Heart left ventricle (tissue), 16 donors: ENCODE measurements at regions of chr14 and their contacts with region 1.

Region 1: GRCh38 chr14:75427482-75428229 is at the start of gene JDP2:
- DNase-seq: peak; percentile 96 to 98 (median 97)
- ATAC-seq: peak; percentile 88 to 96 (median 93)
- H3K4me3 ChIP-seq: peak within 1 kb of the TSS; percentile 47 to 96 (median 79)
- H3K27ac ChIP-seq: peak within 1 kb of the TSS; percentile 75 to 98 (median 95)
- H3K4me1 ChIP-seq: peaks cover 4 to 57% (median 50%) of the 10 kb centered on the region in 12 donors
- H3K27me3 ChIP-seq: no peaks in the 10 kb centered on the region
- CTCF ChIP-seq: peak in 9 of 12 donors; percentile 8 to 48 (median 23)
- POLR2A ChIP-seq: peak; percentile 21 to 83
- total RNA-seq, gene JDP2: 12.2 to 72.6 (median 28.1) TPM

Region 2: DNA sequence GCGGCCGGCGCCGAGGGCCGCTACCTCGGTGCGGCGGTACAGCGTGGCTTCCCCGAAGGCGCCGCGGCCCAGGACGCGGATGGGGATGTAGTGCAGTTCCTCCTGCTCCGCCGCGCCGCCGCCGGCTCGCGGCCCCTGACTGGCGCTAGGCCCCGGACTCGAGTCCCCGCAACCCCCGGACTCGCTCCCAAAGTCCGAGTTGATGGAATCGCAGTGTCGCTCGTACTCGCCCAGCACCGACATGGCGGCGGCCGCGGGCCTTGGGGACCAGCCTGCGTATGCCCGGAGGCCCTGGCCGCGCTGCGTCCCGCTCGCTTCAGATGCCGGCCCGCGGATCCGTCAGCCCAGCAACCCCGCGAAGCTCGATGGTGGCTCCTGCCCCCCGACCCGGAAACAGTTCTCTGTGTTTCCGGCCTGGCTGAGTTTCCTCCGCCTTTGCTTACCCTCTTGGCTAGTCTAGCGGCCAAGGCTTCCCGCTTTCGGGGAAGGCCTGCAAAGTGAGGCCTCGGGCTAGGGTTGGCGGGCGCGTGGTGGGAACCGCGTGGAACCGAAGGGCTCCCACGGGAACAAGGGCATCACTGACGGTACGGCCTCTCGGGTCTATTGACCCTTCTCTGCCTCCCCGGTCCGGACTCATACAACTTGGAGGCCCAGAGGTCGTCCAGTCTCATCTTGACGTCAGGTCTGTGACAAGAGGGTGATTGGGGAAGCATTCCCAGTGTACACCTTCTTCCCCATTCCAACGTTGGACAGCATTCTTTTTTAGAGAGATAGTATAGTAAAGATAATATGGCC is 300.8 kb before region 1 on chr14 and contains the start of gene NEK9:
- intact Hi-C with region 1: loop called in 1 of 10 experiments (anchors 10 kb)
- DNase-seq: peak; percentile 93 to 94 (median 93)
- ATAC-seq: peak; percentile 94 to 96 (median 96)
- H3K4me3 ChIP-seq: peak within 1 kb of the TSS; percentile 57 to 96 (median 80)
- H3K27ac ChIP-seq: peak within 1 kb of the TSS; percentile 87 to 99 (median 97)
- H3K4me1 ChIP-seq: peaks cover 3 to 47% (median 29%) of the 10 kb centered on the region in 12 donors
- H3K27me3 ChIP-seq: no peaks in the 10 kb centered on the region
- CTCF ChIP-seq: peak in 2 of 12 donors; percentile 11 to 14
- POLR2A ChIP-seq: peak in 1 of 2 donors; percentile 56
- total RNA-seq, gene NEK9: 69.0 to 114 (median 98.3) TPM

Region 3: DNA sequence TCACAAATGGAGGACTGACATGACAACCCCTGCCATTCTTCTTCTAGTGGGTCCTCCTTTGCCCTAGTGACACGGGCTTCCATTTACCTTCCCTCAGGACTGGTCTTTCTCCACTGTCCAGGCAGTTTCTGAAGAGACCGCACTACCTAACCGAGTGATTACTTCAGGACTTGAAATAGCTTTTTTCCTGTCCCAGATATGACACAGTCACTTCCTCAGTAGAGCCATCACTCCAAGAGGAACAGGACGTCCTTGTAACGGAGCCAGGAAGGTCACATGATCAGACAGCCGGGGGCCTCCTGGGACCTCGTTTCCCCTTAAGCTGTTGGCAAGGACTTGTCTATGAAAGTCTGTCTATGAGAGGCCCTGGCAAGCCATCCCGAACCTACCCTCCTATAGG is 86.7 kb before region 1 on chr14:
- intact Hi-C with region 1: loop called in 3 of 10 experiments (anchors 1 kb)
- DNase-seq: peak; percentile 90 to 97 (median 91)
- ATAC-seq: peak; percentile 96 to 97 (median 97)
- H3K4me3 ChIP-seq: peak overlapping the region in 1 of 12 donors; percentile 26
- H3K27ac ChIP-seq: peak overlapping the region; percentile 71 to 95 (median 88)
- H3K4me1 ChIP-seq: peaks cover 10 to 79% (median 32%) of the 10 kb centered on the region in 12 donors
- H3K27me3 ChIP-seq: no peaks in the 10 kb centered on the region
- CTCF ChIP-seq: no peak
- POLR2A ChIP-seq: peak in 1 of 2 donors; percentile 81

Region 4: DNA sequence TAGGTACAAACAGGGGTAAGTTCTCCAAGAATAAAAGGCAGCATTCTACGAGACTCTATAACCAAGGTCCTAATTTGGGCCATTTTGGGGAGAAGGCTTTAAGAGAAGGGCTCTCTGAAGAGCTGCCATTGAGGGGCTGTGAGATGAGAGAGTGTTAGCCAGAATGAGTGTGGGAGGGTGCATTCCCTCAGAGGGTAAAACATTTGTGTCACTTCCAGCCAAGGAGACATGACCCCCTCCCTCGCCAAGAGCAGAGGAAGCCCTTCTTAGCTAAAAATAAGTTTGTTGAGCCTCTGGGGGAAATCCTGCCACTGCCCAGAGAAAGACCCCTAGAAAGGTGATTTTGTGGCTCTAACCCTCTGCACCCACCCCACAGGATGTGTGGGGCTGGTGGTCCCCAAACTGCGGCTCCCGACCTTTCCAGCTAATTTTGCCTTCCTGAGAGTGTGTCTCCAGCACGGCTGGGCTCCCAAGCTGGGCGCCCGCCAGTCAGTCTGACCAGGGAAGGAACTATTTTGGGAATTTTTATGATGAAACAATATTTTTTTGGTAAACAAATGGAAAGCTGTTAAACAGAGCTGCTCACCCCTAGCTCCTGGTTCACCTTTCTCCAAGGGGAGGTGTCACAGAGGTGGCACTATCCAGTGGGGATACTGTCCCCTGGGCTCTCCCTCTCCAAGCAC is 65.8 kb before region 1 on chr14:
- intact Hi-C with region 1: no loop called
- DNase-seq: no peak
- ATAC-seq: peak in 2 of 4 donors; percentile 34 to 42
- H3K4me3 ChIP-seq: no peak overlapping the region
- H3K27ac ChIP-seq: peak overlapping the region in 2 of 12 donors; percentile 14 to 44
- H3K4me1 ChIP-seq: peaks cover 0 to 16% (median 4%) of the 10 kb centered on the region in 12 donors
- H3K27me3 ChIP-seq: no peaks in the 10 kb centered on the region
- CTCF ChIP-seq: no peak
- POLR2A ChIP-seq: no peak

Region 5: GRCh38 chr14:75383721-75384120 is 43.9 kb before region 1 on chr14:
- intact Hi-C with region 1: no loop called
- DNase-seq: no peak
- ATAC-seq: peak in 2 of 4 donors; percentile 36 to 59
- H3K4me3 ChIP-seq: no peak overlapping the region
- H3K27ac ChIP-seq: peak overlapping the region in 1 of 12 donors; percentile 57
- H3K4me1 ChIP-seq: peaks cover 0 to 17% (median 0%) of the 10 kb centered on the region in 12 donors
- H3K27me3 ChIP-seq: no peaks in the 10 kb centered on the region
- CTCF ChIP-seq: no peak
- POLR2A ChIP-seq: no peak

Region 6: GRCh38 chr14:75399821-75400678 is 27.6 kb before region 1 on chr14:
- intact Hi-C with region 1: loop called in 1 of 10 experiments (anchors 2 kb)
- DNase-seq: peak; percentile 84 to 96 (median 90)
- ATAC-seq: peak; percentile 95 to 96 (median 96)
- H3K4me3 ChIP-seq: no peak overlapping the region
- H3K27ac ChIP-seq: peak overlapping the region in 11 of 12 donors; percentile 40 to 83 (median 70)
- H3K4me1 ChIP-seq: peaks cover 0 to 33% (median 25%) of the 10 kb centered on the region in 12 donors
- H3K27me3 ChIP-seq: no peaks in the 10 kb centered on the region
- CTCF ChIP-seq: no peak
- POLR2A ChIP-seq: no peak

Region 7: GRCh38 chr14:75452900-75453747 is 25.5 kb after region 1 on chr14:
- intact Hi-C with region 1: loop called in 1 of 10 experiments (anchors 2 kb)
- DNase-seq: peak in 4 of 5 donors; percentile 54 to 76 (median 65)
- ATAC-seq: peak; percentile 39 to 66 (median 58)
- H3K4me3 ChIP-seq: no peak overlapping the region
- H3K27ac ChIP-seq: peak overlapping the region; percentile 46 to 87 (median 74)
- H3K4me1 ChIP-seq: peaks cover 3 to 94% (median 69%) of the 10 kb centered on the region in 12 donors
- H3K27me3 ChIP-seq: no peaks in the 10 kb centered on the region
- CTCF ChIP-seq: no peak
- POLR2A ChIP-seq: no peak

Region 8: GRCh38 chr14:75469606-75470237 is 42.1 kb after region 1 on chr14:
- intact Hi-C with region 1: no loop called
- DNase-seq: no peak
- ATAC-seq: peak in 1 of 4 donors; percentile 17
- H3K4me3 ChIP-seq: no peak overlapping the region
- H3K27ac ChIP-seq: peak overlapping the region in 1 of 12 donors; percentile 68
- H3K4me1 ChIP-seq: peaks cover 0 to 21% (median 8%) of the 10 kb centered on the region in 12 donors
- H3K27me3 ChIP-seq: no peaks in the 10 kb centered on the region
- CTCF ChIP-seq: no peak
- POLR2A ChIP-seq: no peak

Region 9: DNA sequence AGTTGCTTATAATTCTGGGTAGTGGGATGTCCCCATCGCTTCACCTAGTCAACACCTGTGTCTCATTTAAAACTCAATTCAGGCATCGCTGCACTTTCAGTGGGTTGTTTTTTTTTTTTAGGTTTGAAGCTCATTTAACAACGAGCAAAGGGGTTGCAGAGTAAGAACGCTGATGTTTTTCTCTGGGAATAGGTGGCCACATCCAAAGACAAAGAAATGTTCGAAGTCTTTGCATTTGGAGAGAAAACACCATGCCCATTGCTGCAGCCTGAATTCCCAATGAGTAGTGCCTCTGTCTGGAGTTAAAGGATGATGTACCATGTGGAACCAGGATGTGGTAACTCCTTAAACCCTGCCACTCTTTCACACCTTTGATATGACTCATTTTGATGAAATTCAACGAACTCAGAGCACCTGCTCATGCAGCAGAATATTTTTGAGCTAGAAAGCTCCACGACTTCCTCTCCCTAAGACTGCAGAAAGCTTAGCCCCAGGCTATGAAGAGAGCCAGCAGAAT is 59.6 kb after region 1 on chr14:
- intact Hi-C with region 1: loop called in 4 of 10 experiments (anchors 2 to 10 kb)
- DNase-seq: no peak
- ATAC-seq: no peak
- H3K4me3 ChIP-seq: no peak overlapping the region
- H3K27ac ChIP-seq: no peak overlapping the region
- H3K4me1 ChIP-seq: peaks cover 0 to 4% (median 0%) of the 10 kb centered on the region in 12 donors
- H3K27me3 ChIP-seq: no peaks in the 10 kb centered on the region
- CTCF ChIP-seq: no peak
- POLR2A ChIP-seq: no peak